Aorta (tissue), 5 donors: ENCODE measurements at regions of chr21 and their contacts with region 1.

Region 1: GRCh38 chr21:26153758-26154157 is 16.8 kb downstream of the APP start:
- DNase-seq: no peak
- ATAC-seq: no peak
- H3K4me3 ChIP-seq: no peak overlapping the region
- H3K27ac ChIP-seq: no peak overlapping the region
- H3K4me1 ChIP-seq: peaks cover 0 to 4% of the 10 kb centered on the region in 2 donors
- H3K27me3 ChIP-seq: no peaks in the 10 kb centered on the region

Region 2: GRCh38 chr21:25944672-25945213 is 209.0 kb before region 1 on chr21:
- intact Hi-C with region 1: no loop called
- DNase-seq: no peak
- ATAC-seq: no peak
- H3K4me3 ChIP-seq: no peak overlapping the region
- H3K27ac ChIP-seq: no peak overlapping the region
- H3K4me1 ChIP-seq: no peaks in the 10 kb centered on the region
- H3K27me3 ChIP-seq: no peaks in the 10 kb centered on the region

Region 3: DNA sequence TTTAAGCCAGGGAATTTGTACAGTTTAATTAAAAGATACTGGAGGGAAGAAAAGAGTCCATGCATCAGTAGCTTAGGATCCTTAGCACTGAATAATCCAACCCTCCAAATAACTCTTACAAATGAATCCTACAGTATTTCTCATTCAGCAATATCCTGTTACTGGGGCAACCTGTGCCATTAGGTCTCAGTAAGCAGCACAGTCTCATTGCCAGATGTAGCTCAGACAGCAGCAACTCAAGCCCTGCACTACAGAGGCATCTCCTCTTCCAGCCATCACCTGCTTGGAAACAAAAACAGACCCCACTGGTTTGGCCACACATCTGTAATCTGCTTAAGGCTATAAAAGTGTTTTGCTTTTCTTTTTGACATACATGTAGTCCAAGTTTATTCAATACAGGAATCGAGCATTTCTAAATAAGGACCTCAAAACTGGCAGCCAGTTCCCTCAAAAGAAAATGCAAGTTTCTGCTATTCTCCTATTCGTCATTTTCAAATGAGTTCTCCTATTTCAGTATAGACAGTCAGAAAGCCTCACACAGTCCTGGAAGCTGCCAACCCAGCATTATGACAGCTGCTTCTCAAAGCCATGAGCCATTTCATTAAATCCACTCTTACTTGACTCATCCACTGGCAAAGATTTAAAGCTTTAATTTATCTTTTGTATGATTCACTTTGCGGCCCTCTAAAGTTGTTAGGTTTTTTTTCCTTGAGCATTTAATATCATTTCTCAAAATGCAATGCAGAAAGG is 112.2 kb before region 1 on chr21:
- intact Hi-C with region 1: no loop called
- DNase-seq: no peak
- ATAC-seq: no peak
- H3K4me3 ChIP-seq: no peak overlapping the region
- H3K27ac ChIP-seq: no peak overlapping the region
- H3K4me1 ChIP-seq: no peaks in the 10 kb centered on the region
- H3K27me3 ChIP-seq: no peaks in the 10 kb centered on the region

Region 4: DNA sequence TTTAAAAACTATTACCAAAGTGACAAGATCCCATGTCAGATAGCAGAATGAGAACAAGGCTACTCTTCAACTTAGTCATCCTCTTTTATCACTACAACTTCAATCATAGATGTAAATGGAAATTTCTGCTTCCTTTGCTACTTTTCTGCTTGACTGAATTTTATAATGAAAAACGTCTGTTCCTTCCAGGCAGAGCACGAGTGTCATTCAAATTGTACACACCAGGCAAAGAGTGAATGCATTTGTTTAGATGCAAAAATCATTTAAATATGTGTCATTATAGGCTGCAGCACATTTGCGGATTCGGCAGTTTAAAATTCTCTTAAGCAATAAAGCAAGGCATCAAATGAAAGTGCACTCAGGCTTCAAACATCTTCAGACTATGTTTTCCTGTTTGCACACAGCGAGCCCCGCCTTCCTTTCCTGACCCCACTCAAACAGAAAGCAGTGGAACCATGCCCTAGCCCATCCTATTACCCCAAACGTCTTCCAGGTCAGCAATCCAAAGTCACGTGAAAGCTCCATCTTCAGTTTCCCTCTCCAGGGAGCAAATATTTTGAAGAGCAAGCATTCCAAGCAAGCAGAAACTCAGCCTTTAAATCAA is 82.8 kb before region 1 on chr21:
- intact Hi-C with region 1: loop called in 1 of 2 experiments (anchors 10 kb)
- DNase-seq: no peak
- ATAC-seq: no peak
- H3K4me3 ChIP-seq: no peak overlapping the region
- H3K27ac ChIP-seq: no peak overlapping the region
- H3K4me1 ChIP-seq: peaks cover 0 to 4% of the 10 kb centered on the region in 2 donors
- H3K27me3 ChIP-seq: no peaks in the 10 kb centered on the region

Region 5: DNA sequence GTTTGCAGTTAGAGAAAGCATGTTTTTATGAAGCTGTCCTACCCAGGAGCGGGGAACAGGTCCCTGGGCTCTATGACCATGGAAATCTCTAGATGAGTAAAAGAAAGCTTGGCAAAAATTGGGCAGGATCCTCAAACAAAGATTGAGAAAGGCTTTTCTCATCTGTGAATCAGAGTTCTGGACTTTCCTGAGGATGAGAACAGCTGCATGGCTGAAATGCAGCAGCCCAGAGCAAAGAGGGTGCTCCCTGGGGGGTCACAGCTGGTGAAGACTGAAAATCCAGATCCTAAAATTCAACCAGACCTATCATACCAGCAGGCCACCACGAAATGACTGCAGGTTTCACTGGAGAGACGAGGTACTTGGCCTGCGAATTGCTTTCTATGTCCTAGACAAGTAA is 82.5 kb after region 1 on chr21:
- intact Hi-C with region 1: no loop called
- DNase-seq: no peak
- ATAC-seq: no peak
- H3K4me3 ChIP-seq: no peak overlapping the region
- H3K27ac ChIP-seq: no peak overlapping the region
- H3K4me1 ChIP-seq: peaks cover 0 to 2% of the 10 kb centered on the region in 2 donors
- H3K27me3 ChIP-seq: no peaks in the 10 kb centered on the region

Region 6: GRCh38 chr21:26490771-26491170 is 337.0 kb after region 1 on chr21:
- intact Hi-C with region 1: no loop called
- DNase-seq: no peak
- ATAC-seq: no peak
- H3K4me3 ChIP-seq: no peak overlapping the region
- H3K27ac ChIP-seq: no peak overlapping the region
- H3K4me1 ChIP-seq: no peaks in the 10 kb centered on the region
- H3K27me3 ChIP-seq: no peaks in the 10 kb centered on the region